Naive thymus-derived CD4-positive, alpha-beta T cell (primary cell): ENCODE measurements at regions of chr1 and their contacts with region 1.

Region 1: DNA sequence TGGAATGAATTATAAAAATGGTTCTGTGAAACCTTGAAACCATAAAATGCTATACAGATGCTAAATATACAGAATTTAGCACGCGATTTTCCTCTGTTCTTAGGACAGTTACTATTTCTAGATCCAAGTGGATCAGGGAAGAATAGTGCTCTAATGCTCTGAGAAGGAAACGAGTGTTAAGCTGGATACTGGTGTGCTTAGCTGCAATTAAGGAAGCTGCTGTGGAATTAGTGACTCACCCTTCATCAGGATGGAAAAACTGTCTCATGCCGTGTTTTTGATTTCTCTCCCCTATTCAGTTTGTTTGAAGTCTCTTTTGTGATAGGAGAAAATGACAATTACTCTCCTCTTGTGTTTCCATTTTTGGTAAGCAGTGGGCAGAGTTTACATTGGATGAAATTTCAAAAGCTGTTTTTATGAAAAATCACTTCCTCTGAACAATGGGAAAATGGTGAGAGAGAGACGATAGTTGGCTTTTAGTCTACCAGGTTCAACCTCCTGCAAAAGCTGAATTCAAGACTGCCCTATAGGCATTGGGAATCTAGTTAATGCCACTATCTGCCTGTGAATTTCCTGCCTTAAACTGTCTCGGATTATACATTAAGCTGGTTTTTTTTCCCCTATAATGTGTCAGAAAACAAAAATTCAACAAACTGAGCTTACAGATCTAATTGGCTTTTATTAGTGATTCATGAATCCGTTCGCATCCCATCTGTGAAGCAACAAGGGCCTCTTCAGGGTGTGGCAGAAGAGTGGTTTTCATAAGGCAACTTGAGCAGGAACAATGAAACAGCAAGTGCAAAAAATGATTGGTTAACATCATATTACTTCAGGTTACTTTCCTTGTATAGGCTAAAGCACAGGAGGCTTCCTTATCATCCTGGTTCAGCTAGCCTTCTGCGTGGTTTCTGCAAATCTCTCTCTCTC is 179.8 kb downstream of the ST6GALNAC3 start:
- DNase-seq: no peak
- ATAC-seq: no peak
- H3K4me3 ChIP-seq: no peak overlapping the region
- H3K4me3 Mint-ChIP-seq: peak overlapping the region in 3 of 10 donors; percentile 8 to 28 (median 20)
- H3K27ac ChIP-seq: no peak overlapping the region
- H3K27ac Mint-ChIP-seq: peak overlapping the region in 7 of 9 donors; percentile 7 to 84 (median 32)
- H3K4me1 ChIP-seq: peaks cover 0 to 45% of the 10 kb centered on the region in 2 donors
- H3K4me1 Mint-ChIP-seq: peaks cover 22 to 83% (median 69%) of the 10 kb centered on the region in 7 donors
- H3K27me3 ChIP-seq: no peaks in the 10 kb centered on the region
- H3K27me3 Mint-ChIP-seq: no peaks in the 10 kb centered on the region

Region 2: GRCh38 chr1:76035053-76035452 is 219.3 kb before region 1 on chr1:
- CTCF ChIA-PET with region 1: no interaction called
- POLR2A ChIA-PET with region 1: no interaction called
- intact Hi-C with region 1: no loop called
- DNase-seq: no peak
- ATAC-seq: no peak
- H3K4me3 ChIP-seq: no peak overlapping the region
- H3K4me3 Mint-ChIP-seq: no peak overlapping the region
- H3K27ac ChIP-seq: no peak overlapping the region
- H3K27ac Mint-ChIP-seq: no peak overlapping the region
- H3K4me1 ChIP-seq: no peaks in the 10 kb centered on the region
- H3K4me1 Mint-ChIP-seq: peaks cover 0 to 11% (median 0%) of the 10 kb centered on the region in 7 donors
- H3K27me3 ChIP-seq: no peaks in the 10 kb centered on the region
- H3K27me3 Mint-ChIP-seq: peaks cover 0 to 18% (median 3%) of the 10 kb centered on the region in 5 donors

Region 3: GRCh38 chr1:76294482-76295194 is 40.3 kb after region 1 on chr1:
- CTCF ChIA-PET with region 1: no interaction called
- POLR2A ChIA-PET with region 1: no interaction called
- intact Hi-C with region 1: loop called (anchors 1 to 5 kb)
- DNase-seq: peak in 5 of 9 donors; percentile 21 to 59 (median 49)
- ATAC-seq: peak; percentile 62
- H3K4me3 ChIP-seq: peak overlapping the region; percentile 7
- H3K4me3 Mint-ChIP-seq: peak overlapping the region; percentile 27 to 83 (median 69)
- H3K27ac ChIP-seq: peak overlapping the region; percentile 41
- H3K27ac Mint-ChIP-seq: peak overlapping the region; percentile 63 to 88 (median 81)
- H3K4me1 ChIP-seq: peaks cover 41 to 63% of the 10 kb centered on the region in 2 donors
- H3K4me1 Mint-ChIP-seq: peaks cover 21 to 93% (median 77%) of the 10 kb centered on the region in 7 donors
- H3K27me3 ChIP-seq: no peaks in the 10 kb centered on the region
- H3K27me3 Mint-ChIP-seq: peaks cover 0 to 2% (median 0%) of the 10 kb centered on the region in 5 donors